Caco-2 (cell line): ENCODE measurements at regions of chr10 and their contacts with region 1.

Region 1: GRCh38 chr10:72834183-72834825 is 59.2 kb upstream of the OIT3 start:
- DNase-seq: peak; percentile 53 to 72
- H3K4me3 ChIP-seq: no peak overlapping the region
- H3K4me3 Mint-ChIP-seq: no peak overlapping the region
- H3K27ac Mint-ChIP-seq: no peak overlapping the region
- H3K4me1 ChIP-seq: no peaks in the 10 kb centered on the region
- H3K4me1 Mint-ChIP-seq: peaks cover 13% of the 10 kb centered on the region
- H3K27me3 ChIP-seq: no peaks in the 10 kb centered on the region
- H3K27me3 Mint-ChIP-seq: no peaks in the 10 kb centered on the region
- CTCF ChIP-seq: peak; percentile 73 to 81

Region 2: GRCh38 chr10:72375585-72375984 is 458.7 kb before region 1 on chr10:
- CTCF ChIA-PET with region 1: interaction called, 27 read pairs
- POLR2A ChIA-PET with region 1: no interaction called
- intact Hi-C with region 1: loop called (anchors 1 kb)
- DNase-seq: peak in 1 of 2 experiments; percentile 60
- H3K4me3 ChIP-seq: no peak overlapping the region
- H3K4me3 Mint-ChIP-seq: no peak overlapping the region
- H3K27ac Mint-ChIP-seq: no peak overlapping the region
- H3K4me1 ChIP-seq: no peaks in the 10 kb centered on the region
- H3K4me1 Mint-ChIP-seq: no peaks in the 10 kb centered on the region
- H3K27me3 ChIP-seq: no peaks in the 10 kb centered on the region
- H3K27me3 Mint-ChIP-seq: no peaks in the 10 kb centered on the region
- CTCF ChIP-seq: peak; percentile 22 to 62

Region 3: DNA sequence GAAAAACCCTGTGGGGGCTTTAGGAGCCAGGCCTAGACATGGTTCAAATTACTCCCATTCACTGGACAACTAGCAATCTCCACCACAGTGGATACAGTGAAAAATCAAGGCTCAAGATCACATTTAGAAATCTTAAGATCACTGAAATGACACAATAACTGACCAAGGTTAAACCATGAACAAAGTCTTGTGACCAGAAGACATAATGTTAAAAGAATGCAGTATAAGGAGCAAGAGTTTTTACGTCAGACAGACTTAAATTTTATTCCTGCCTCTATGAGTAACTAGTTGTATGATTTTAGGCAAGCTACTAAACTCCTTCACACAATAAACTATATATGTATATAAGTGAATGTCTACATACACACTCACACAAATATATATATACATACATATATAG is 276.9 kb before region 1 on chr10:
- CTCF ChIA-PET with region 1: no interaction called
- POLR2A ChIA-PET with region 1: no interaction called
- intact Hi-C with region 1: loop called (anchors 5 kb)
- DNase-seq: no peak
- H3K4me3 ChIP-seq: no peak overlapping the region
- H3K4me3 Mint-ChIP-seq: no peak overlapping the region
- H3K27ac Mint-ChIP-seq: no peak overlapping the region
- H3K4me1 ChIP-seq: no peaks in the 10 kb centered on the region
- H3K4me1 Mint-ChIP-seq: no peaks in the 10 kb centered on the region
- H3K27me3 ChIP-seq: no peaks in the 10 kb centered on the region
- H3K27me3 Mint-ChIP-seq: no peaks in the 10 kb centered on the region
- CTCF ChIP-seq: no peak

Region 4: GRCh38 chr10:72673280-72673679 is 161.0 kb before region 1 on chr10:
- CTCF ChIA-PET with region 1: no interaction called
- POLR2A ChIA-PET with region 1: no interaction called
- intact Hi-C with region 1: no loop called
- DNase-seq: no peak
- H3K4me3 ChIP-seq: no peak overlapping the region
- H3K4me3 Mint-ChIP-seq: no peak overlapping the region
- H3K27ac Mint-ChIP-seq: no peak overlapping the region
- H3K4me1 ChIP-seq: peaks cover 12% of the 10 kb centered on the region
- H3K4me1 Mint-ChIP-seq: peaks cover 6% of the 10 kb centered on the region
- H3K27me3 ChIP-seq: no peaks in the 10 kb centered on the region
- H3K27me3 Mint-ChIP-seq: no peaks in the 10 kb centered on the region
- CTCF ChIP-seq: no peak

Region 5: GRCh38 chr10:73032536-73032935 is 198.2 kb after region 1 on chr10:
- CTCF ChIA-PET with region 1: no interaction called
- POLR2A ChIA-PET with region 1: no interaction called
- intact Hi-C with region 1: no loop called
- DNase-seq: no peak
- H3K4me3 ChIP-seq: no peak overlapping the region
- H3K4me3 Mint-ChIP-seq: no peak overlapping the region
- H3K27ac Mint-ChIP-seq: no peak overlapping the region
- H3K4me1 ChIP-seq: no peaks in the 10 kb centered on the region
- H3K4me1 Mint-ChIP-seq: no peaks in the 10 kb centered on the region
- H3K27me3 ChIP-seq: no peaks in the 10 kb centered on the region
- H3K27me3 Mint-ChIP-seq: no peaks in the 10 kb centered on the region
- CTCF ChIP-seq: no peak

Region 6: GRCh38 chr10:73186266-73186665 is 352.0 kb after region 1 on chr10:
- CTCF ChIA-PET with region 1: no interaction called
- POLR2A ChIA-PET with region 1: no interaction called
- intact Hi-C with region 1: no loop called
- DNase-seq: no peak
- H3K4me3 ChIP-seq: no peak overlapping the region
- H3K4me3 Mint-ChIP-seq: no peak overlapping the region
- H3K27ac Mint-ChIP-seq: no peak overlapping the region
- H3K4me1 ChIP-seq: peaks cover 7% of the 10 kb centered on the region; the same call in 1 of the 2 replicates
- H3K4me1 Mint-ChIP-seq: peaks cover 16% of the 10 kb centered on the region
- H3K27me3 ChIP-seq: no peaks in the 10 kb centered on the region
- H3K27me3 Mint-ChIP-seq: no peaks in the 10 kb centered on the region
- CTCF ChIP-seq: no peak